Activated CD4-positive, alpha-beta T cell treated with anti-CD3 and anti-CD28 coated beads for 36 hours (primary cell): ENCODE measurements at regions of chr1 and their contacts with region 1.

Region 1: GRCh38 chr1:207868774-207869721 is 41.9 kb downstream of the CD34 start:
- DNase-seq: peak; percentile 82
- ATAC-seq: peak; percentile 49
- H3K4me3 Mint-ChIP-seq: peak overlapping the region; percentile 90
- H3K27ac Mint-ChIP-seq: peak overlapping the region; percentile 94
- H3K4me1 Mint-ChIP-seq: peaks cover 84% of the 10 kb centered on the region
- H3K27me3 Mint-ChIP-seq: no peaks in the 10 kb centered on the region

Region 2: DNA sequence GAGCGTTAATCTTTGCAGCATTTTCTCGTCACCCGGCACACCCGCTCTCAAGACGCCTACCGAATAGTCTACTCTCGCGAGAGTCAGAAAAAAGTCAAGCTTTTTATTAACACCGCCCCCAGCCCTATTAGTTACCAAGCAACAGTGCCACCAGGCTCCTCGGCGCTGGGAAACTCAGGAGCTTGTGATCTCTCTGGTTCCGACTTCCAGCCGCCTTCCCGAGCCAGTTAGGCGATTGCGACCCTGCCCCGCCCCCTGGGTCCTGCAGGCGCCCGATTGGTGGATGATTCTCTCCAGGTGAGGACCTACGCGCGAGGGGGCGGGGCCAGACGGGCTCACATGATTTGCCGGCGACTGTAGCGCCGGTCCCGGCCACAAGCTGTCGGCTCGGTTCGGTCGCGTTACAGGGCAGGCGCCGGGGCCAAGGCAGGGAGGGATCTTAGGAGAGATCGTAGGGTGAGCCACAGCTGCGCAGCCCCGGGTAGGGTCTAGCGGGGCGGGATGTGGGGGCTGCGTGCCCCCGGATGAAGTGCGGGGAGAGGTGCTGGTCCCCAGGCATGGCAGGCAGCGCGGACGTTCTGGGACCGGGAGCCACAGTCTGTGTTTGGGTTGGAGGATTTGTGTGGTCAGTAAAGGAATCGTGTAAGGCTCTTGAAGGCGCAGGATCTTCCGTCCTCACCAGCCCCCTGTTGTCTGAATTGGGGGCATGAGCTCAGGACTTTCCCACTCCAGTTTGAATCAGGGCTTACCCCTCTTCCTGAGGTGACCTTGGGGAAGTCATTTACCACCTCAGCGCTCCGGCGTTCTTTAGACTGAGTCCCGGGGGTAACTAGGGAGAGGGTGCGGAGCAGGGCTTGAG is 815.9 kb before region 1 on chr1 and contains the start of gene PFKFB2:
- CTCF ChIA-PET with region 1: no interaction called
- POLR2A ChIA-PET with region 1: no interaction called
- intact Hi-C with region 1: loop called in 1 of 2 experiments (anchors 10 kb)
- DNase-seq: peak; percentile 96
- ATAC-seq: peak; percentile 83
- H3K4me3 Mint-ChIP-seq: peak within 1 kb of the TSS; percentile 99
- H3K27ac Mint-ChIP-seq: peak within 1 kb of the TSS; percentile 89
- H3K4me1 Mint-ChIP-seq: peaks cover 39% of the 10 kb centered on the region
- H3K27me3 Mint-ChIP-seq: no peaks in the 10 kb centered on the region
- total RNA-seq, gene PFKFB2: 3.1 to 3.5 TPM

Region 3: GRCh38 chr1:207719234-207719633 is 149.8 kb before region 1 on chr1:
- CTCF ChIA-PET with region 1: no interaction called
- POLR2A ChIA-PET with region 1: no interaction called
- intact Hi-C with region 1: no loop called
- DNase-seq: no peak
- ATAC-seq: no peak
- H3K4me3 Mint-ChIP-seq: no peak overlapping the region
- H3K27ac Mint-ChIP-seq: no peak overlapping the region
- H3K4me1 Mint-ChIP-seq: no peaks in the 10 kb centered on the region
- H3K27me3 Mint-ChIP-seq: no peaks in the 10 kb centered on the region

Region 4: DNA sequence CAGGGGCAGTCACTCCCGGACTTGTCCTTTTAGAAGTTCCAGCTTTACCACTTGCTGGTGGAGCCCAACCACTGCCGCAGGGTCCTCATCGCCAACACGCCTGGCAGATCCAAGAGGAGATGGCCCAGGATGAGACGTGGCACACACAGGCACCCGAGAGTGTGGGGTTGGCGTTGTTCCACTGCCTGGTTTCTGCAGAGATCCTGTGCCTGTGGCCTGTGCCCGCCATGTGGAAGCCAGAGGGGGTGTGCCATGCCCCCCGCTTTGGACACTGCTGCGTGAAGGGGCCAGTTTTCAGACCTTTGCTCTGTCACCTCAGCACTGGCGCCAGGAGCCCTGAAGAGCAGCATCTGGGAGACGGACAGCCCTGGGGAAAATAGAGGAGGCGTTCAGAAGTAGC is 106.4 kb before region 1 on chr1:
- CTCF ChIA-PET with region 1: no interaction called
- POLR2A ChIA-PET with region 1: no interaction called
- intact Hi-C with region 1: no loop called
- DNase-seq: no peak
- ATAC-seq: no peak
- H3K4me3 Mint-ChIP-seq: no peak overlapping the region
- H3K27ac Mint-ChIP-seq: no peak overlapping the region
- H3K4me1 Mint-ChIP-seq: peaks cover 6% of the 10 kb centered on the region
- H3K27me3 Mint-ChIP-seq: no peaks in the 10 kb centered on the region

Region 5: DNA sequence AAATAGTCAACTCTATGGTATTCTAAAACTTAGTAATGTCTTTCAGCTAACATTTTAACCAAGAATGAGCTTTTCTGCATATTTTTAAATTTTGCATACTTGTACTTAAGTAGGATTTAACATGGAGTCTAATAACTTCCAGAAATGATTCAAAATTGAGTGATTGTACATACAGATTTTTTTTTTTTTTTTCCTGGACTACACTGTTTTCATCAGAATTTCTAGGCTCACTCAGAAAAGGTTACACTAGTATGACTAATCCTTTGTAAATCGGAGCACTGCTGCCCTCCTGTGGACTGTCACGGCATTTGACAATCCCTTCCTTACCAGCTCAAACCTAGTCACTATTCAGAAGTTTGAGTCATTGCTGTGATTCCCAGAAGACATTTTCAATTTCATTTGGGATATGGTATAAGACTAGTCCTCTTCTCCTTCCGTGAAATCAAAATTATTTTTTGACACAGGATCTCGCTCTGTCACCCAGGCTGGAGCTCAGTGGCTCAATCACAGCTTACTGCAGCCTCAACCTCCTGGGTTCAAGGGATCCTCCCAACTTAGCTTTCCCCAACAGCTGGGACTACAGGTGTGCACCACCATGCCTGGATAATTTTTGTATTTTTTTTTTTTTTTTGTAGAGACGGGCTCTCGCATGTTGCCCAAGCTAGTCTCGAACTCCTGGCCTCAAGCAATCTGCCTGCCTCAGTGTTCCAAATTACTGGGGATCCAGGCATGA is 71.7 kb before region 1 on chr1:
- CTCF ChIA-PET with region 1: interaction called, 29 read pairs
- POLR2A ChIA-PET with region 1: interaction called, 6 read pairs
- intact Hi-C with region 1: no loop called
- DNase-seq: peak; percentile 90
- ATAC-seq: peak; percentile 91
- H3K4me3 Mint-ChIP-seq: no peak overlapping the region
- H3K27ac Mint-ChIP-seq: no peak overlapping the region
- H3K4me1 Mint-ChIP-seq: peaks cover 36% of the 10 kb centered on the region
- H3K27me3 Mint-ChIP-seq: no peaks in the 10 kb centered on the region

Region 6: GRCh38 chr1:207885129-207886032 is 16.3 kb after region 1 on chr1:
- CTCF ChIA-PET with region 1: interaction called, 179 read pairs
- POLR2A ChIA-PET with region 1: no interaction called
- intact Hi-C with region 1: loop called (anchors 1 to 2 kb)
- DNase-seq: peak; percentile 85
- ATAC-seq: peak; percentile 62
- H3K4me3 Mint-ChIP-seq: no peak overlapping the region
- H3K27ac Mint-ChIP-seq: peak overlapping the region; percentile 97
- H3K4me1 Mint-ChIP-seq: peaks cover 35% of the 10 kb centered on the region
- H3K27me3 Mint-ChIP-seq: peaks cover 2% of the 10 kb centered on the region

Region 7: DNA sequence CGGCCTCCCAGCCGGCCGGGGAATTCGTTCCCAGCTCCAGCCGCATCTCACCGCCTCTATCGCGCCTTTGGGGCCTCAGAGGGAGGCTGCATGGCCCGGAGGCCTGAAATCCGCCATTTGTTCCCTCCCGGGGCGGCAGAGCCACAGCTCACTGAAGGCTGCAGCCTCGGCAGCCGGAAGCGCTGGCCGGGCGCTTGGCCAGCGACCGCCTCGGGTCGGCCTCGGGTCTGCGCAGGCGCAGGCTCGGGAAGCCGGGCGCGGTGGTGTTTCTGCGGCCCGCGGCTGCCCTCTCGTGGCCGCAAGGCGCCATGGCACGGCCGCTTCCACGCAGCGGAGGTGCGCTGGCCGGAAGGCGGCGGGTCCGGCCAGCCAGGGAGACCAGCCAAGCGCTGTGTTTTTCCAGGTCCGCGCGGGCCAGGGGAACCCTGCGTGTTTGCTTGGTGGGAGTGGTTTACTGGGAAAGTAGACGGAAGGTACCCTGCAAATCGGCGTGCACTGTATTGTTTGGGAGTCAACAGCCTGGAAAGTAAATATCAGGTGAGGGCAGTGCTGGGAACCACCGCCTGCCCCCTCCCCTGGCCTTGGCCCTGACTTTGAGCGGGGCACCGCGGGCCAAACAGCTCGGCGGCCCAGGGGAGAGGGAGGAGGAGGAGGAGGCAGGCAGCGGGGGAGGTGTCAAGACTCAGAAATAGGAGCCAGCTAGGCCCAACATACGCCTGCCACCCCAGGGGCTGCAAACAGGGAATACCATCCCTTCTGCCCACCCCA is 94.6 kb after region 1 on chr1:
- CTCF ChIA-PET with region 1: interaction called, 13 read pairs
- POLR2A ChIA-PET with region 1: no interaction called
- intact Hi-C with region 1: loop called in 1 of 2 experiments (anchors 1 kb)
- DNase-seq: peak; percentile 90
- ATAC-seq: peak; percentile 82
- H3K4me3 Mint-ChIP-seq: peak overlapping the region; percentile 75
- H3K27ac Mint-ChIP-seq: peak overlapping the region; percentile 71
- H3K4me1 Mint-ChIP-seq: peaks cover 2% of the 10 kb centered on the region
- H3K27me3 Mint-ChIP-seq: peaks cover 18% of the 10 kb centered on the region